ENCODE measurements at regions of chr7 and their contacts with region 1.

Region 1: DNA sequence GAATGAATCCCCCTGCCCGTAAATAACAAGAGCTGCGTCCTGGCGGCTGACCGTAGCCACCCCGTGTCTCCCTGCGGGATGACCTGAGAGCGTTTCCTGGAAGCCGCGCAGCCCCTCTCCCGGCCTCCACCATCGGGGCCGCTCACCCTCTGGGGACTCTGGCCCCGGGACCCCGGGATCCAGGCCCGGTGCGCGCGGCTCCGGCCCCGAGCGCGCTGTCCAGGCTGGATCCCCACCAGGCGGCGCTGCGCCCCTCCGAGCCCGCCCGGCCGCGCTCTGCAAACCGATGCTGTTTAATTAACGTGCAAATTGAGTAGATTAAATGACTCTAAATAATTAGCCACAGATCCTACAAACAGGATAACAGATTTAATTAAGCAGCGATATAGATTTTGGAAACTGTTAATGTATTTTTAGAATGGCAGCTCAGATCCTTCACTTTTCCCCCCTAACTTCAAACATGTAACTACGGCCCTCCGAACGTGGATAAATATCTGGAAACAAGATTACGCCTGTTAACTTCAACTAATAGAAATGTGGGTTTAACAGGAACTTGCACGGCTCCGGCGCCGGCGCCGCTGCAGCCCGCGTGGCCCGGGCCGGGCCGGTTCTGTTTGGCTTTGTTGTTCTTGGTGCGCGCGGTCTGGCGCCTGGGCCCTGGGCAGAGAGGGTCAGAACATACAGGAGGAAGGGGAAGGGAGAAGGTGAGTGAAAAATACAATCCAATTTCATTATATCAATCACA is 7.1 kb upstream of the UNCX start:
- DNase-seq: peak in 13 of 14 experiments; percentile 14 to 69 (median 38)
- ATAC-seq: peak; percentile 48
- H3K4me3 ChIP-seq: no peak overlapping the region
- H3K4me3 Mint-ChIP-seq: no peak overlapping the region
- H3K27ac ChIP-seq: no peak overlapping the region
- H3K27ac Mint-ChIP-seq: no peak overlapping the region
- H3K4me1 ChIP-seq: peaks cover 7% of the 10 kb centered on the region
- H3K4me1 Mint-ChIP-seq: peaks cover 17% of the 10 kb centered on the region
- H3K27me3 ChIP-seq: peaks cover 64 to 86% of the 10 kb centered on the region in 2 experiments
- H3K27me3 Mint-ChIP-seq: peaks cover 76% of the 10 kb centered on the region
- CTCF ChIP-seq: peak; percentile 71

Region 2: GRCh38 chr7:1412322-1413261 is 187.0 kb after region 1 on chr7:
- CTCF ChIA-PET with region 1: interaction called, 3 read pairs
- POLR2A ChIA-PET with region 1: no interaction called
- intact Hi-C with region 1: loop called (anchors 1 to 2 kb)
- DNase-seq: peak; percentile 85 to 94 (median 89)
- ATAC-seq: peak; percentile 83
- H3K4me3 ChIP-seq: peak overlapping the region; percentile 26
- H3K4me3 Mint-ChIP-seq: peak overlapping the region; percentile 6
- H3K27ac ChIP-seq: no peak overlapping the region
- H3K27ac Mint-ChIP-seq: no peak overlapping the region
- H3K4me1 ChIP-seq: peaks cover 22% of the 10 kb centered on the region
- H3K4me1 Mint-ChIP-seq: peaks cover 8% of the 10 kb centered on the region
- H3K27me3 ChIP-seq: peaks cover 0 to 3% of the 10 kb centered on the region in 2 experiments
- H3K27me3 Mint-ChIP-seq: peaks cover 19% of the 10 kb centered on the region
- CTCF ChIP-seq: peak; percentile 75

Region 3: GRCh38 chr7:1473864-1474512 is 248.4 kb after region 1 on chr7:
- CTCF ChIA-PET with region 1: interaction called, 4 read pairs
- POLR2A ChIA-PET with region 1: no interaction called
- intact Hi-C with region 1: loop called in 1 of 2 experiments (anchors 2 kb)
- DNase-seq: peak; percentile 82 to 94 (median 86)
- ATAC-seq: peak; percentile 97
- H3K4me3 ChIP-seq: no peak overlapping the region
- H3K4me3 Mint-ChIP-seq: no peak overlapping the region
- H3K27ac ChIP-seq: no peak overlapping the region
- H3K27ac Mint-ChIP-seq: no peak overlapping the region
- H3K4me1 ChIP-seq: peaks cover 18% of the 10 kb centered on the region
- H3K4me1 Mint-ChIP-seq: peaks cover 16% of the 10 kb centered on the region
- H3K27me3 ChIP-seq: no peaks in the 10 kb centered on the region
- H3K27me3 Mint-ChIP-seq: no peaks in the 10 kb centered on the region
- CTCF ChIP-seq: peak; percentile 90

Measured in CD4-positive, alpha-beta T cell (primary cell).